CD4-positive, alpha-beta T cell (primary cell): ENCODE measurements at regions of chr19 and their contacts with region 1.

Region 1: GRCh38 chr19:36014029-36014924 is at the start of gene ALKBH6:
- DNase-seq: peak; percentile 97 to 100 (median 99)
- ATAC-seq: peak; percentile 98
- H3K4me3 ChIP-seq: peak within 1 kb of the TSS; percentile 88
- H3K4me3 Mint-ChIP-seq: peak within 1 kb of the TSS; percentile 99
- H3K27ac ChIP-seq: peak within 1 kb of the TSS; percentile 75 to 89
- H3K27ac Mint-ChIP-seq: peak within 1 kb of the TSS; percentile 94
- H3K4me1 ChIP-seq: peaks cover 32% of the 10 kb centered on the region
- H3K4me1 Mint-ChIP-seq: peaks cover 46% of the 10 kb centered on the region
- H3K27me3 ChIP-seq: no peaks in the 10 kb centered on the region
- H3K27me3 Mint-ChIP-seq: no peaks in the 10 kb centered on the region
- CTCF ChIP-seq: no peak
- total RNA-seq, gene ALKBH6: 38.1 to 41.8 TPM

Region 2: DNA sequence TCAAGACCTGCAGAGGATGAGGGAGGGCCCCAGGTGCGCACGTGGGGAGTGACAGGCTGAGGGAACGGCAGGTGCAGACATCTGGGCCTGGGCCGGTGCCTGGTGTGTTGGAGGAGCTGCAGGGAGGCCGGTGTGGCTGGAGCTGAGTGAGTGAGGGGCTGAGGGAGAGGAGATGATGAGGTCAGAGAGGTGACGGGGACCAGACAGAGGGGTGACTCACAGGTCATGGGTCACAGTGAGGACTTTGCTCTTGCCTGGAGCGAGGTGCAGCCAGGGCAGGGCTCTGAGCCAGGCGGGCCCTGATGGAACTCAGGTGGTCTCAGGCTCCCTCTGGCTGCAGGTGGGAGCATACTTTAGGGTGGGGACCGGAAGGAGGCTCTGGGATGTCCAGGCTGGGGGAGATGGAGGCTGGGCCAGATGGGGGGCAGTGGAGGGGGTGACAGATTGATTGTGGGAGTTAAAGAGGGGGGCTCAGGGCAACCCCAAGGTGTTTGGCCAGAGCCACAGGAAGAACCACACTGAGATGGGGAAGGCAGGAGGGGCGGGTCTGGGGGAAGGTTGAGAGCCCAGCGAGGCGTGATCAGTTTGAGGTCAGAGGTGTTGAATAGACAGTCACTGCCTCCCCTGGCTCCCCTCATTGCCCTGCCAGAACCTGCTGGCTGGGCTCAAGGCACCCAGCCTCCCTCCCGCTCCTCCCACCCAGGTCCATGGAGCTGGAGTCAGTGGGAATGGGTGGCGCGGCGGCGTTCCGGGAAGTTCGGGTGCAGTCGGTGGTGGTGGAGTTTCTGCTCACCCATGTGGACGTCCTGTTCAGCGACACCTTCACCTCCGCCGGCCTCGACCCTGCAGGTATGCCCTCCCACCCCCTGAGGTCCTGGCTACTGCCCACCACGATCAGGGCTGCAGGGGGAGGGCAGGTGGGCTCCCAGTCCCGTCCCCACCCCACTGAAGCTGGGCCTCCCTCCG is 230.5 kb before region 1 on chr19:
- CTCF ChIA-PET with region 1: no interaction called
- POLR2A ChIA-PET with region 1: no interaction called
- intact Hi-C with region 1: no loop called
- DNase-seq: no peak
- ATAC-seq: no peak
- H3K4me3 ChIP-seq: no peak overlapping the region
- H3K4me3 Mint-ChIP-seq: no peak overlapping the region
- H3K27ac ChIP-seq: no peak overlapping the region
- H3K27ac Mint-ChIP-seq: no peak overlapping the region
- H3K4me1 ChIP-seq: no peaks in the 10 kb centered on the region
- H3K4me1 Mint-ChIP-seq: no peaks in the 10 kb centered on the region
- H3K27me3 ChIP-seq: no peaks in the 10 kb centered on the region
- H3K27me3 Mint-ChIP-seq: no peaks in the 10 kb centered on the region
- CTCF ChIP-seq: no peak

Region 3: DNA sequence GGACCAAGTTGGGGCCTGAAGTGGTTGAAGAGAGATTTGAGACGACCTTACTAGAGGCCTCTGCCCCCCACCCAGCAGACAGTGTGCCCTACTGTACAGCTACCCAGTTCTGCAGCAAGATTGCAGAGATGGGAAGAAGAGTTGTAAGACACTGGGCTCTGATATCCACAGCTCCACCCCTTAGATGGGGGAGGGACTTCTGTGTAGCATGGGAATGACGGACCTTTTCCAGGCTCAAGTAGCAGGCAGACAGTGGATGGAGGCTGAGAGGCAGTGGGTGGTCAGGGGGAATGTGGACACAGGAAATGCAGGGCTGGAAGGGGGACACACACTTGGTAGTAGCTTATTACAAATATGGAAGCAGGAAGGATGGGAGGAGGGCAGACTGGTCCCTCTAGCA is 65.1 kb before region 1 on chr19:
- CTCF ChIA-PET with region 1: no interaction called
- POLR2A ChIA-PET with region 1: interaction called, 10 read pairs
- intact Hi-C with region 1: no loop called
- DNase-seq: no peak
- ATAC-seq: no peak
- H3K4me3 ChIP-seq: no peak overlapping the region
- H3K4me3 Mint-ChIP-seq: peak overlapping the region; percentile 10
- H3K27ac ChIP-seq: no peak overlapping the region
- H3K27ac Mint-ChIP-seq: peak overlapping the region; percentile 82
- H3K4me1 ChIP-seq: peaks cover 46% of the 10 kb centered on the region
- H3K4me1 Mint-ChIP-seq: peaks cover 63% of the 10 kb centered on the region
- H3K27me3 ChIP-seq: no peaks in the 10 kb centered on the region
- H3K27me3 Mint-ChIP-seq: no peaks in the 10 kb centered on the region
- CTCF ChIP-seq: no peak

Region 4: DNA sequence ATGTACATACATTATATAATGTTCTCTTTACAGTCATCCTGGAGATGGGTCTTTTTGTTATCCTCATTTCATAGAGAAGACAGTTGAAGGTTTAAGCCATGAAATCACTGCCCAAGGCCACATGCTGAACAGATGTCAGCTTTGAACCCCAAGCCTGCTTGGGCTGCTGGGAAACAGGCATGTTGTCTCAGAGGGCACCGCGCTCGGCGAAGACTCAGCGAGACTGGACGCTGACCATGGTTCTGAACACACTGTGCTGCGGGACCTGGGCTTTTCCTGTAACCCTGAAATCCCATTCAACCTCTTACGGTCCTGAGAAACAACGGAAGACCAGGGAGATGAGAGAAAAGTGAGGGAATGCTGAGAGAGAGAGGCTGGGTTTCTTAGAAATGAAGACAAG is 50.8 kb before region 1 on chr19:
- CTCF ChIA-PET with region 1: interaction called, 7 read pairs
- POLR2A ChIA-PET with region 1: interaction called, 7 read pairs
- intact Hi-C with region 1: loop called in 1 of 2 experiments (anchors 5 kb)
- DNase-seq: peak in 9 of 14 experiments; percentile 21 to 67 (median 33)
- ATAC-seq: no peak
- H3K4me3 ChIP-seq: no peak overlapping the region
- H3K4me3 Mint-ChIP-seq: no peak overlapping the region
- H3K27ac ChIP-seq: no peak overlapping the region
- H3K27ac Mint-ChIP-seq: no peak overlapping the region
- H3K4me1 ChIP-seq: peaks cover 27% of the 10 kb centered on the region
- H3K4me1 Mint-ChIP-seq: peaks cover 12% of the 10 kb centered on the region
- H3K27me3 ChIP-seq: no peaks in the 10 kb centered on the region
- H3K27me3 Mint-ChIP-seq: peaks cover 9% of the 10 kb centered on the region
- CTCF ChIP-seq: no peak

Region 5: GRCh38 chr19:36032251-36033104 is 18.2 kb after region 1 on chr19 and contains the start of gene CLIP3:
- CTCF ChIA-PET with region 1: no interaction called
- POLR2A ChIA-PET with region 1: no interaction called
- intact Hi-C with region 1: no loop called
- DNase-seq: peak in 12 of 14 experiments; percentile 12 to 54 (median 38)
- ATAC-seq: no peak
- H3K4me3 ChIP-seq: peak within 1 kb of the TSS; percentile 38
- H3K4me3 Mint-ChIP-seq: peak within 1 kb of the TSS; percentile 45
- H3K27ac ChIP-seq: no peak within 1 kb of the TSS
- H3K27ac Mint-ChIP-seq: no peak within 1 kb of the TSS
- H3K4me1 ChIP-seq: peaks cover 39% of the 10 kb centered on the region
- H3K4me1 Mint-ChIP-seq: peaks cover 30% of the 10 kb centered on the region
- H3K27me3 ChIP-seq: peaks cover 0 to 4% of the 10 kb centered on the region in 2 experiments
- H3K27me3 Mint-ChIP-seq: no peaks in the 10 kb centered on the region
- CTCF ChIP-seq: no peak
- total RNA-seq, gene CLIP3: 0.47 to 0.85 TPM